Thyroid gland (tissue), 4 donors: ENCODE measurements at regions of chr2 and their contacts with region 1.

Region 1: GRCh38 chr2:172938713-172939375 is 136.8 kb upstream of the MAP3K20 start:
- DNase-seq: no peak
- H3K4me3 ChIP-seq: no peak overlapping the region
- H3K27ac ChIP-seq: no peak overlapping the region
- H3K4me1 ChIP-seq: no peaks in the 10 kb centered on the region
- H3K27me3 ChIP-seq: no peaks in the 10 kb centered on the region
- CTCF ChIP-seq: no peak
- POLR2A ChIP-seq: no peak

Region 2: GRCh38 chr2:172813314-172813888 is 125.4 kb before region 1 on chr2:
- intact Hi-C with region 1: loop called (anchors 5 kb)
- DNase-seq: no peak
- H3K4me3 ChIP-seq: no peak overlapping the region
- H3K27ac ChIP-seq: no peak overlapping the region
- H3K4me1 ChIP-seq: no peaks in the 10 kb centered on the region
- H3K27me3 ChIP-seq: no peaks in the 10 kb centered on the region
- CTCF ChIP-seq: peak in 2 of 6 experiments; percentile 13 to 37
- POLR2A ChIP-seq: no peak